ENCODE measurements at regions of chr6 and their contacts with region 1.

Region 1: DNA sequence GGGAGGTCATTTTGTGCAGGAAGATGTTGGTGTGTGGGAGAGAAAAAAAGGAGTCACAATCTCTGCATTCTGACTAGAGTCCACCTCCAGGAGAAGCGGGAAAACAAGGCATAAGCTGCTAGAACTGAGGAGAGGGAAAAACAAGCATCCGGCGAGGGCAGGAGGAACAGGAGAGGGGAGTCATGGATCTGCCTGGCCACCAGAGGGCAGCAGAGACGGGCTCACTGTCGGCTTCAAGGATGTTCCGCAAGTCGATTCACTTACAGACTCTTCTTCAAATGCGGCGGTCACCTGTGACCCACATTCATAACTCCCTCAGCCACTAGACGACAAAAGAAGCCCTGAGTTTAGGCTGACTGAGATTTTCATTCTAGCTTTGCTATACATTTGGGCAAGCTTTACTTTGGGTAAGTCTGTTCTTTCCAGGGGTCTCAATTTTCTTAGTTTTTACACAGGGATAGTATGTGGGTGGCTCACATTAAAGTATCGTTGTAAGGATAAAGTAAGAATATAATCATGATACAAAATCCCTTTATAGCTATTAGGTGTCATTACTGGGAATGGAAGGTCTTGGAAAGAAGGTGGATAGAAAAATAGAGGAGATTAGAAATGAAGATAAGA is 6.6 kb upstream of the BTNL2 start:
- DNase-seq: peak; percentile 64 to 70
- H3K4me3 ChIP-seq: no peak overlapping the region
- H3K27ac ChIP-seq: no peak overlapping the region
- H3K4me1 ChIP-seq: no peaks in the 10 kb centered on the region
- H3K27me3 ChIP-seq: peaks cover 0 to 5% of the 10 kb centered on the region in 2 donors
- CTCF ChIP-seq: peak; percentile 82 to 86 (median 86)
- POLR2A ChIP-seq: no peak

Region 2: DNA sequence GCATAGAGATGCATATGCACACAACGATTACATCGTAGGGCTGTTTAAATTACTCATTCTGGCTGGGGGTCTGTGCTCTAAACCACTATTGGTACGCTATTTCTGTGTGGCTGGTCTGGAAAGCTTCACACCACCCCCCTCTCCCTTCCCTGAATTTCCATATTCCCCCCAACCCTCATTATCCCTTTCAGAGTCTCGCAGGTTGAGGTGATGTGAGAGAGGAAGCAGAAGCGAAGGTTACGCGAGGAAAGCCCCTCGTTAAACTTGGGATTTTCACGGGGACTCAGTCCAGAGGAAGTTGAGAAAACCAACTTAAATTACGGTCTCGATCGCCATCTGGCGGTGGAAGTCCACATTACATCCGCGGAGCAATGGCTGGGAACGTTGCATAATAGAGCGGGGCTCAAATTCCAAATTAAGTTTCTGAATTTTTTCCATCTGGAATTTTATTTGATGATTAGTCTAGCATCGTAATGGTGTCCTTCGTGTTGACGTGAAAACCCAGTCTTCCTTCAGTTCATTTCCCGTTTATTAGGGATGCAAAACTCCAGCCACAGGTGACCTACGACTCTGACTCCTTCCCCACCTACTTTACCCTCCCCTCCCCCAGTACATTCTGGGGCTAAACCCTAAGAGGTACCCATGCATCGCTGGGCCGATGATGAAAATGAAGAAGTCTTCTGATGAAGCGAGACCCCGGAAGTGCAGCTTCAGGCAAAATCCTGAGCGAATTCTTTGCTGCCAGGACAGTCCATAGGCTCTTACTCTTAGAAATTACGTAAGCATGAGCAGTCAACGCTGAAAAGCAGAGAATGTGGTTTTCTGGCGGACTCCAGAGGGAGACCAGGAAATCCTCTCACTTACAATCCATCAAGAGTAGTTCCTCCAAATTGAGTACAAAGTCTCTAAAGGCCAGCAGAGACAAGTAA is 383.6 kb after region 1 on chr6:
- intact Hi-C with region 1: loop called (anchors 10 kb)
- DNase-seq: peak; percentile 73 to 79
- H3K4me3 ChIP-seq: no peak overlapping the region
- H3K27ac ChIP-seq: no peak overlapping the region
- H3K4me1 ChIP-seq: no peaks in the 10 kb centered on the region
- H3K27me3 ChIP-seq: no peaks in the 10 kb centered on the region
- CTCF ChIP-seq: peak; percentile 86 to 88 (median 88)
- POLR2A ChIP-seq: no peak